HepG2 (cell line): ENCODE measurements at regions of chr2 and their contacts with region 1.

Region 1: DNA sequence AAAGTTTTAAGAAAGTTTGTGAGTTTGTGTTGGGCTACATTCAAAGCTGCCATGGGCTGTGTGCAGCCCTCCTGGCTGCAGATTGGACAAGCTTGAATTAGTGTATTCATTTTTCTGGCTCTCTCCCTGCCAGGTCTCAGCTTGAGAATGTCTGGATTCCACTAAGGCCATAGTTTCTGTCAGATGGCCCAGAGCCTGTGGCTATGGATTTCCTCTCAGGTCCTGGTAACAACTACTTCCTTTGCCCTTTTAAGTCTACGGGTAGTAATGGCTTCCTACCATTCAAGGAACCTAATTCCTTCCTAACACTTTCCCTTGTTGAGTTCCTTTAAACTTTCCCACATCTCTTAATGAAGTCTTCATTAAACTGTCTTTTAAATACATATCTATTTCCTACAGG is 24.3 kb upstream of the PSMD14 start:
- DNase-seq: no peak
- ATAC-seq: no peak
- H3K4me3 ChIP-seq: no peak overlapping the region
- H3K27ac ChIP-seq: no peak overlapping the region
- H3K4me1 ChIP-seq: peaks cover 8% of the 10 kb centered on the region; the same call in 1 of the 2 replicates
- H3K27me3 ChIP-seq: no peaks in the 10 kb centered on the region
- CTCF ChIP-seq: no peak
- EP300 ChIP-seq: no peak
- POLR2A ChIP-seq: no peak
- RAD21 ChIP-seq: no peak

Region 2: GRCh38 chr2:161556440-161556839 is 272.5 kb after region 1 on chr2:
- CTCF ChIA-PET with region 1: no interaction called
- POLR2A ChIA-PET with region 1: no interaction called
- in situ Hi-C with region 1: no loop called
- intact Hi-C with region 1: loop called (anchors 5 kb)
- DNase-seq: no peak
- ATAC-seq: no peak
- H3K4me3 ChIP-seq: no peak overlapping the region
- H3K27ac ChIP-seq: no peak overlapping the region
- H3K4me1 ChIP-seq: no peaks in the 10 kb centered on the region
- H3K27me3 ChIP-seq: no peaks in the 10 kb centered on the region
- CTCF ChIP-seq: no peak
- EP300 ChIP-seq: no peak
- POLR2A ChIP-seq: no peak
- RAD21 ChIP-seq: no peak

Region 3: DNA sequence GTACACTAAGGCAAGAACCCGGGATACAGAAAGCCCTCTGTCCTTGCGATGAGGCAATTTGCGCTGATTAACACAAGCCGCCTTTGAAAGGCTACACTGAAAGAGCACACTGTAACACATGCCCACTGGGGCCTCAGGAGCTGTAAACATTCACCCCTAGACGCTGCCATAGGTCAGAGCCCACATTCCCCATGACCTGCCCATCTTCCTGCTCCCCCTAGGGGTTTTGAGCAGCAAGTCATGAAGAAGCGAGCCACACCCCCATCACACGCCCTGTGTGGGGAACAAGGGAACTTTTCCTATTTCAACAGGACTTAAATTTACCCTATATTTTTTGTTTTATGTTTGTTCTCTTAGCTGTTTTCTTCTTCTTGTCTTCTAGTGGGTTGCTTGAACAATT is 292.5 kb after region 1 on chr2:
- CTCF ChIA-PET with region 1: no interaction called
- POLR2A ChIA-PET with region 1: no interaction called
- in situ Hi-C with region 1: no loop called
- intact Hi-C with region 1: loop called (anchors 1 kb)
- DNase-seq: peak; percentile 68
- ATAC-seq: peak; percentile 100
- H3K4me3 ChIP-seq: no peak overlapping the region
- H3K27ac ChIP-seq: no peak overlapping the region
- H3K4me1 ChIP-seq: no peaks in the 10 kb centered on the region
- H3K27me3 ChIP-seq: no peaks in the 10 kb centered on the region
- CTCF ChIP-seq: peak; percentile 66
- EP300 ChIP-seq: no peak
- POLR2A ChIP-seq: no peak
- RAD21 ChIP-seq: no peak

Region 4: GRCh38 chr2:161594445-161594844 is 310.5 kb after region 1 on chr2:
- CTCF ChIA-PET with region 1: no interaction called
- POLR2A ChIA-PET with region 1: no interaction called
- in situ Hi-C with region 1: no loop called
- intact Hi-C with region 1: no loop called
- DNase-seq: no peak
- ATAC-seq: peak; percentile 81
- H3K4me3 ChIP-seq: no peak overlapping the region
- H3K27ac ChIP-seq: no peak overlapping the region
- H3K4me1 ChIP-seq: no peaks in the 10 kb centered on the region
- H3K27me3 ChIP-seq: no peaks in the 10 kb centered on the region
- CTCF ChIP-seq: no peak
- EP300 ChIP-seq: no peak
- POLR2A ChIP-seq: no peak
- RAD21 ChIP-seq: no peak